ENCODE measurements at regions of chr7 and their contacts with region 1.

Region 1: DNA sequence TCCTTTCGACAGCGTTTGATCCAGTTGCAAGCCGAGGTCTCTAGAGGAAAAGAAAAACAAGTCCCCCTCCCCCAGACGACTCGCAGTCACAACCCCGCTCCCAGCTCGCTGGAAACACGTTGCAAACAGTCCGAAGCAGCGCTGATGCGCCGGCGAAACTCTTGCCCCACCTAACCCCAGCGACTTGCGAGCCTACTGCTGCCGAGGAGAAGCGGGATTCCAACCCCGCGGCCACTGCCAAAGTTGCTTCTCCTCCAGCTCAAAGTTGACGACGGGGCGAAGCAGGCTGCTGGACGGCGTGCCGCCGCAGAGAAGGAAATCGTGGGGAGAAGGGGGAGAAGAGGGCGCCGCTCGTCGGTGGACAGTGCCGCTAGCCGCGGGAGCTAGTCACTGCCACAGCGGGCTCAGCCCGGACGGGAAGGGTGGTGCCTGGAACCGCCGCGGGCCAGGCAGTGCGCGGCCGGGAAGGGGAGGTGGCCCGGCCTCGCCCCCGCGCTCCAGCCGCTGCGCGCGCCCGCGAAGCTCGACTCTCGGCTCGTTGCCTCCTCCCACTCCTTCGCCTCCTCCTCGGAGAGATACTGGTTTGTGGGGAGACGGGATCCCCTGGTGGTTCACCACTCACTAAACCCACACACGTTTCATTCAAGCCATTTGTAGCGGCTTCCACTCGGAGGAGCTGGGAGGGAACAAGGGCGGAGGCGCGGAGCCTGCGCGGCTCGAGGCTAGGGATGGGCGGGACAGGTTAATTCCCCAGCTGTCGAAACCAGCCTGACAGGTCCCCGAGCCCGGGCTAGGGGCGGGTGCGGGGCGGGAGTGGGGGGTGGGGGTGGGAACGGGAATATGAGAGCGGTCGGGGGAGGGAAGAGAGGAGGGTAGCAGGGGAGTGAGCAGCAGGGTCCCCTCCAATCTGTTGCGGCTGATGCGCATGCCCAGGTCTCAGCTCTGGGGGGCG is at the start of gene GPR37:
- DNase-seq: peak; percentile 93
- ATAC-seq: peak; percentile 89
- H3K4me3 ChIP-seq: peak within 1 kb of the TSS; percentile 73
- H3K27ac ChIP-seq: peak within 1 kb of the TSS; percentile 78
- H3K4me1 ChIP-seq: peaks cover 2% of the 10 kb centered on the region; the same call in 1 of the 2 replicates
- H3K27me3 ChIP-seq: no peaks in the 10 kb centered on the region
- CTCF ChIP-seq: peak; percentile 74
- POLR2A ChIP-seq: no peak
- RAD21 ChIP-seq: peak; percentile 83
- total RNA-seq, gene GPR37: 9.2 and 9.3 TPM in 2 replicates

Region 2: GRCh38 chr7:124171068-124171467 is 594.6 kb before region 1 on chr7:
- CTCF ChIA-PET with region 1: interaction called, 11 read pairs
- POLR2A ChIA-PET with region 1: no interaction called
- dilution Hi-C with region 1: no loop called
- in situ Hi-C with region 1: no loop called
- intact Hi-C with region 1: loop called (anchors 1 kb)
- DNase-seq: peak; percentile 62
- ATAC-seq: peak; percentile 77
- H3K4me3 ChIP-seq: no peak overlapping the region
- H3K27ac ChIP-seq: peak overlapping the region; percentile 55; the same call in 1 of the 2 replicates
- H3K4me1 ChIP-seq: peaks cover 2% of the 10 kb centered on the region; the same call in 1 of the 2 replicates
- H3K27me3 ChIP-seq: no peaks in the 10 kb centered on the region
- CTCF ChIP-seq: peak; percentile 79
- POLR2A ChIP-seq: no peak
- RAD21 ChIP-seq: peak; percentile 80

Region 3: GRCh38 chr7:124459101-124460055 is 306.3 kb before region 1 on chr7:
- CTCF ChIA-PET with region 1: interaction called, 9 read pairs
- POLR2A ChIA-PET with region 1: no interaction called
- dilution Hi-C with region 1: no loop called
- in situ Hi-C with region 1: no loop called
- intact Hi-C with region 1: loop called (anchors 1 kb)
- DNase-seq: peak; percentile 87
- ATAC-seq: peak; percentile 76
- H3K4me3 ChIP-seq: no peak overlapping the region
- H3K27ac ChIP-seq: peak overlapping the region; percentile 86
- H3K4me1 ChIP-seq: peaks cover 13% of the 10 kb centered on the region
- H3K27me3 ChIP-seq: no peaks in the 10 kb centered on the region
- CTCF ChIP-seq: no peak
- POLR2A ChIP-seq: no peak
- RAD21 ChIP-seq: no peak

Region 4: GRCh38 chr7:124649397-124650029 is 116.2 kb before region 1 on chr7:
- CTCF ChIA-PET with region 1: no interaction called
- POLR2A ChIA-PET with region 1: no interaction called
- dilution Hi-C with region 1: no loop called
- in situ Hi-C with region 1: no loop called
- intact Hi-C with region 1: loop called (anchors 5 kb)
- DNase-seq: no peak
- ATAC-seq: no peak
- H3K4me3 ChIP-seq: peak overlapping the region; percentile 20; the same call in 1 of the 2 replicates
- H3K27ac ChIP-seq: no peak overlapping the region
- H3K4me1 ChIP-seq: peaks cover 2% of the 10 kb centered on the region
- H3K27me3 ChIP-seq: no peaks in the 10 kb centered on the region
- CTCF ChIP-seq: no peak
- POLR2A ChIP-seq: no peak
- RAD21 ChIP-seq: no peak

Region 5: GRCh38 chr7:124777268-124777667 is 11.6 kb after region 1 on chr7:
- CTCF ChIA-PET with region 1: interaction called, 11 read pairs
- POLR2A ChIA-PET with region 1: no interaction called
- dilution Hi-C with region 1: no loop called
- in situ Hi-C with region 1: no loop called
- intact Hi-C with region 1: no loop called
- DNase-seq: no peak
- ATAC-seq: peak; percentile 74
- H3K4me3 ChIP-seq: no peak overlapping the region
- H3K27ac ChIP-seq: no peak overlapping the region
- H3K4me1 ChIP-seq: peaks cover 3% of the 10 kb centered on the region; the same call in 1 of the 2 replicates
- H3K27me3 ChIP-seq: no peaks in the 10 kb centered on the region
- CTCF ChIP-seq: no peak
- POLR2A ChIP-seq: no peak
- RAD21 ChIP-seq: no peak

Measured in IMR-90 (cell line).